ENCODE measurements at regions of chr17 and their contacts with region 1.

Region 1: GRCh38 chr17:12530161-12530560 is 135.5 kb upstream of the MYOCD start:
- DNase-seq: no peak
- H3K4me3 ChIP-seq: no peak overlapping the region
- H3K27ac ChIP-seq: no peak overlapping the region
- H3K4me1 ChIP-seq: no peaks in the 10 kb centered on the region
- H3K27me3 ChIP-seq: no peaks in the 10 kb centered on the region
- CTCF ChIP-seq: no peak
- POLR2A ChIP-seq: no peak

Region 2: DNA sequence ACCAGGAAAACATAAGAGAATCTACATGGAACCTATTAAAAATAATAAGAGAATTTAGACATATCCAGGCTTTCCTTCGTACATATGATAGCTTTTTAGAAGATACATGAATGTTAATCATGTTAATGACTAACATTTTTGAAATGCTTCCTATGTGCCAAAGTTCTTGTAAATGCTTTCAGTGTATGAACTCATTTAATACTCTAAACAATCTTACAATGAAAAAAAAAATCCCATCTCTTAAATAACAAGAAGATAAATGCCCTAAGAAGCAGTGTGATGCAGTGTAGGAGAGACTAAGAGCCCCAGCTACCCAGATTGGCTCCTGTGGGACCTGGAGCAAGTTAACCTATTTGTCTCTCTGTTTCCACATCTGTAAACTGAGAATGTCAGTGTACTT is 84.8 kb before region 1 on chr17:
- CTCF ChIA-PET with region 1: no interaction called
- POLR2A ChIA-PET with region 1: no interaction called
- dilution Hi-C with region 1: no loop called
- intact Hi-C with region 1: no loop called
- DNase-seq: no peak
- H3K4me3 ChIP-seq: no peak overlapping the region
- H3K27ac ChIP-seq: no peak overlapping the region
- H3K4me1 ChIP-seq: no peaks in the 10 kb centered on the region
- H3K27me3 ChIP-seq: no peaks in the 10 kb centered on the region
- CTCF ChIP-seq: no peak
- POLR2A ChIP-seq: no peak

Region 3: GRCh38 chr17:12545877-12546513 is 15.8 kb after region 1 on chr17:
- CTCF ChIA-PET with region 1: interaction called, 13 read pairs
- POLR2A ChIA-PET with region 1: no interaction called
- dilution Hi-C with region 1: no loop called
- intact Hi-C with region 1: no loop called
- DNase-seq: peak; percentile 4
- H3K4me3 ChIP-seq: no peak overlapping the region
- H3K27ac ChIP-seq: no peak overlapping the region
- H3K4me1 ChIP-seq: no peaks in the 10 kb centered on the region
- H3K27me3 ChIP-seq: no peaks in the 10 kb centered on the region
- CTCF ChIP-seq: peak; percentile 48 to 53
- POLR2A ChIP-seq: no peak

Region 4: DNA sequence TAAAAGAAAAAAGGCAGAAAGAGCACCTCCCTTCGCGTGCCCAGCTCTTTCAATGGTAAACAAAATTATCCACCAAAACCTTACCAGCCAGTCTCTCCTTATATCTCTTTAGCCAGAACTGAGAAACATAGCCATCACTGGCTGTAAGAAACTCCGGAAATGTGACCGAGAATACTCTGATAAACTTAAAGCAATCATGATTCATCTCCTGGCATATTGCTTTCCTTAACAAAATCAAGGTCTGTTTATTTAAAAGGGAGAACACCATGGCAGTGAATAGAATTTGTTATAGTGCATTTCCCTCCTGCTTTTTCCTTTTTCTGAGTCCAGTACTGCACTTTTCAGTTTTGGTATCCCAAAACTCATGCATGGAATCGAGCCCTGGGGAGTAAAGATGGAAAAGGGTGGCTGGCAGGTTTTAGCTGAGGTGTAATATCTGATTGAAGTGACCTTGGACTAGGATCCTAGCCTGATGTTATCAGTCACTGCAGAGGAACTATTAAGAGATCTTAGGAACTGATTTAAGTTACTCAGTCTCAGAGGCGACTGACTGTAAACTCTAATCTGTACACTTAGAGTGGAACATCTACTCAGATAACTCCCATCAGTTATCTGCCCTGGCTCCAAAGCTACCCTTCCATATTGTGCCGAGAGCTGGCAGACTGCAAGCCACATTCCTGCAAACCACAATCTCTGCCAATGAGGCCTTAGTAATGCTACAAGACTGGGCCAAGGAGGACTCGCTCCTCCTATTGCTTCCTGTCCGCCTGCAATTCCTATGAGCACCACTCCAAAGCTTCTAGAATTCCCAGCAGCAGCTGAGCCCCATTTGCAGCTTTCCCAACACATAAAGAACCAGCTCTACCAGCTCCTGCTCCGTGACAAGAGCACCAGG is 1531.8 kb after region 1 on chr17:
- CTCF ChIA-PET with region 1: no interaction called
- POLR2A ChIA-PET with region 1: no interaction called
- dilution Hi-C with region 1: no loop called
- intact Hi-C with region 1: loop called (anchors 5 kb)
- DNase-seq: peak; percentile 69
- H3K4me3 ChIP-seq: peak overlapping the region in 1 of 3 experiments; percentile 36
- H3K27ac ChIP-seq: peak overlapping the region; percentile 61
- H3K4me1 ChIP-seq: peaks cover 24% of the 10 kb centered on the region
- H3K27me3 ChIP-seq: no peaks in the 10 kb centered on the region
- CTCF ChIP-seq: no peak
- POLR2A ChIP-seq: no peak